Heart right ventricle (tissue), 16 donors: ENCODE measurements at regions of chr1 and their contacts with region 1.

Region 1: GRCh38 chr1:29579821-29580425 is 343.6 kb downstream of the PTPRU start:
- DNase-seq: no peak
- ATAC-seq: no peak
- H3K4me3 ChIP-seq: no peak overlapping the region
- H3K27ac ChIP-seq: no peak overlapping the region
- H3K4me1 ChIP-seq: peaks cover 0 to 7% (median 0%) of the 10 kb centered on the region in 9 donors
- H3K27me3 ChIP-seq: peaks cover 0 to 44% (median 12%) of the 10 kb centered on the region in 7 donors
- CTCF ChIP-seq: no peak

Region 2: GRCh38 chr1:29556657-29557056 is 23.3 kb before region 1 on chr1:
- intact Hi-C with region 1: loop called in 1 of 10 experiments (anchors 1 kb)
- DNase-seq: no peak
- ATAC-seq: no peak
- H3K4me3 ChIP-seq: no peak overlapping the region
- H3K27ac ChIP-seq: no peak overlapping the region
- H3K4me1 ChIP-seq: no peaks in the 10 kb centered on the region
- H3K27me3 ChIP-seq: peaks cover 0 to 16% (median 0%) of the 10 kb centered on the region in 7 donors
- CTCF ChIP-seq: no peak

Region 3: DNA sequence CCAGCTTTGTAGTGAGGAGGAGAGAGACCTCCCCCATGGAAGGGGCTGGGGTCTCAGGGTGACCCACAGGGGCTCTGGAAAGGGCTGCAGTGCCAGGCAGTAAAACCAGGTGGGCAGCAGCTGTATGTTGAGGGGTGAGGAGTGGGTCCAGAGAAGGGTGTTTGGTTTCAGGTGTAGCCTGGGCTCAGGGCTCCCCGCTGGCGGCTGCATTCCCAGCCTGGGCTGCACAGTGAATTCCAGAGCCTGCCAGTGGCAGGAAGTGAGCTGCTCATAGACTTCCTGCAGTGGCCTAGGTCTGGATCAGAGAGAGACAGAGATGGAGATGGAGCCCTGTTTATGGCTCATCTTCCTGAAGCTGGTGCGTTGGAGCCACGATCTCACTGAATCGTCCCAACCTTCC is 12.8 kb after region 1 on chr1:
- intact Hi-C with region 1: no loop called
- DNase-seq: no peak
- ATAC-seq: no peak
- H3K4me3 ChIP-seq: no peak overlapping the region
- H3K27ac ChIP-seq: no peak overlapping the region
- H3K4me1 ChIP-seq: no peaks in the 10 kb centered on the region
- H3K27me3 ChIP-seq: peaks cover 0 to 41% (median 17%) of the 10 kb centered on the region in 7 donors
- CTCF ChIP-seq: no peak

Region 4: GRCh38 chr1:29655945-29656850 is 76.3 kb after region 1 on chr1:
- intact Hi-C with region 1: no loop called
- DNase-seq: peak in 1 of 2 donors; percentile 2
- ATAC-seq: no peak
- H3K4me3 ChIP-seq: no peak overlapping the region
- H3K27ac ChIP-seq: no peak overlapping the region
- H3K4me1 ChIP-seq: no peaks in the 10 kb centered on the region
- H3K27me3 ChIP-seq: peaks cover 0 to 15% (median 4%) of the 10 kb centered on the region in 7 donors
- CTCF ChIP-seq: peak in 5 of 9 donors; percentile 5 to 31 (median 21)